PC-9 (cell line): ENCODE measurements at regions of chr20 and their contacts with region 1.

Region 1: DNA sequence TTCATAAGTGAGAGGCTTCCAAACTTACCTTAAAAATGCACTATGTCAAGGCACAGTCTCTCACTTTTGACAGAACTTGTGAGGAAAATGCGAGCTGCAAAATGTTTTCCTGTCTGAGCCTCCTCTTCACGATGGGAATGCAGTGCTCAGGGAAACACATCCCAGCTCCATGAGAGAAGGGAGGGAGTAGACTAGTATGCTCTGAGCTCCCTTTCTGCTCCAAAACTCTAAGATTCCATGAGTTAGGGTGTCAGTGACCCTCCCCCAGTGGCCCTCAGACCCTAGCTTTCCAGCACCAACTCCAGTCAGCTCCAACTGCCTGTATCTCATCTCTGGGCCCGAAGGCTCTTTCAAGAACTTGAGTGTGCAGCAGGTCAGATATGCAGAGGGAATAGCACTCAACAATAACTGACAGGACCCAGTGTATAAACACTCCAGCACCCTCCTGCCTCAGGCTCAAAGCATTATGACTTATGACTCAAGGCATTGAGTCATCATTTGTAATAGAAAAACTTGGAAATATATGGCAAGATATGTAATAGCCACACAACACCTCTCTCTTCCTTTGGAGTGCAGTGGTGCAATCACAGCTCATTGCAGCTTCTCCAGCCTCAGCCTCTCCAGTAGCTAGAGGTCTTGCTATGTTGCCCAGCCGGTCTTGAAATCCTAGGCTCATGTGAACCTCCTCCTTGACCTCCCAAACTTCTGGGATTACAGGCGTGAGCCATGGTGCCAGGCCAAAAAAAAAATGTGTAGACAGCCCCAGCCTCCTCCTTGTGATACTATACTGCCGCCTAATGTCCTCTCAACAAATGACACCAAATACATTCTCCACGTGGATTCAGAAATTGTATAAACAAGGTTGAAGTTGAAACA is 16.7 kb upstream of the ENTPD6 start:
- DNase-seq: peak; percentile 89 to 99
- H3K4me3 ChIP-seq: no peak overlapping the region
- H3K27ac ChIP-seq: peak overlapping the region; percentile 73
- H3K4me1 ChIP-seq: peaks cover 52% of the 10 kb centered on the region
- H3K27me3 ChIP-seq: no peaks in the 10 kb centered on the region
- CTCF ChIP-seq: peak; percentile 90

Region 2: DNA sequence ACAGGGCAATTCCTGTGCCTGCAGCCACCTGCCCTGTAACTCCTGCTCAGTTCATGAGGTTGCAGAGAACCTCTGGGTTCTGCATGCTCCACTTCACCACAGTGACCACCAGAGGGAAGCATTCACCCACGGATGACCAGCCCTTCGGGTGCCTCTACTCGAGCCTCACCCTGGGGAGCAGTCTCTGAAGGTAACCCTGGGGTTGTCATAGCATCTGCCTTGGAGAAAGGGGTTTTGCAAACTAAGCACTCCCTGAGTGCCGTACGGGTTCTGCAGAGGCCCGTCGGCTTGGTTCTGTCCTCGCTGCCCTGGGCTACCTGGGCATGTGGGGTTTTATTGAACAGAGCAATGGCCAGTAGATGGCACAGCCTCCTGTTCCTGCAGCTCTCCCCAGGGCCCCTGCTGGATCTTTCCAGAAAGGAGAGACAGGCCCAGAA is 1289.0 kb before region 1 on chr20:
- CTCF ChIA-PET with region 1: no interaction called
- POLR2A ChIA-PET with region 1: no interaction called
- intact Hi-C with region 1: loop called (anchors 5 kb)
- DNase-seq: peak; percentile 63 to 83
- H3K4me3 ChIP-seq: no peak overlapping the region; the same call in 1 of the 2 replicates
- H3K27ac ChIP-seq: no peak overlapping the region
- H3K4me1 ChIP-seq: peaks cover 14% of the 10 kb centered on the region
- H3K27me3 ChIP-seq: no peaks in the 10 kb centered on the region
- CTCF ChIP-seq: peak; percentile 96

Region 3: DNA sequence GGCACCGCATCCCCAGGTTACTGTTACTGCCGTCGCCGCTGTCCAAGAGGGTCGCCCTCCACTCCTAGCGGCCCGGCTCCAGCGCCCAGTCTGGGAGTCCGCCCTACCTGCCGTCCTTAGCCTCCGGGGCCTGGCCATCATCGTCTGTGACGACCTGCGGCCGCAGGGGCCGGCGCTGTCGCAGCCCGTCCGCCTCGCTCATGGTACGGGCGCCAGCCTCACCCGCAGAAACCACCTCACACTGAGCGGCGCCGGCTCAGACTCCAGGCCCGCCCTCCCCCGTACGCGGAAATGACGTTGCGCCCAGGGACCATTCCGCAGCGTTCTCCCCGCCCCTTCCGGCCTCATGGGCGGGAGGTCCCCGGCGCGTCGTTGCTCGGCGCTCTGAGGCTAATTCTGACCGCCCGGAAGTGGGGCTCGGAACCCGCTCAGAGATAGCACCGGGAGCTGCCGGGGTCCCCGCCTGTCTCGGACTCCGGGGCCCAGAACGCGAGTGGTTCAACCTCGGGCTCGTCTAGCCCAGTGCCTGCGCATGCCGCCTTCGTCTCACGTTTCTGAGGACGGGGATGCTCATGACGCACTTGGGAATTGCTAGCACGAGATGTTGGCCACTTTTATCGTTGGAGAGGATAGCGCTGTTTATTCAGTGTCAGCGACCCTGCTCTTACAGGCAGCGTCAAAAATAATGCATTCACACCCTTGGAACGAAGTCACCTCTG is 186.2 kb before region 1 on chr20 and contains the start of gene APMAP:
- CTCF ChIA-PET with region 1: interaction called, 6 read pairs
- POLR2A ChIA-PET with region 1: no interaction called
- intact Hi-C with region 1: loop called (anchors 1 kb)
- DNase-seq: peak; percentile 75 to 93
- H3K4me3 ChIP-seq: peak within 1 kb of the TSS; percentile 71
- H3K27ac ChIP-seq: peak within 1 kb of the TSS; percentile 54
- H3K4me1 ChIP-seq: peaks cover 49% of the 10 kb centered on the region
- H3K27me3 ChIP-seq: no peaks in the 10 kb centered on the region
- CTCF ChIP-seq: no peak
- total RNA-seq, gene APMAP: 96.6 and 103 TPM in 2 replicates

Region 4: DNA sequence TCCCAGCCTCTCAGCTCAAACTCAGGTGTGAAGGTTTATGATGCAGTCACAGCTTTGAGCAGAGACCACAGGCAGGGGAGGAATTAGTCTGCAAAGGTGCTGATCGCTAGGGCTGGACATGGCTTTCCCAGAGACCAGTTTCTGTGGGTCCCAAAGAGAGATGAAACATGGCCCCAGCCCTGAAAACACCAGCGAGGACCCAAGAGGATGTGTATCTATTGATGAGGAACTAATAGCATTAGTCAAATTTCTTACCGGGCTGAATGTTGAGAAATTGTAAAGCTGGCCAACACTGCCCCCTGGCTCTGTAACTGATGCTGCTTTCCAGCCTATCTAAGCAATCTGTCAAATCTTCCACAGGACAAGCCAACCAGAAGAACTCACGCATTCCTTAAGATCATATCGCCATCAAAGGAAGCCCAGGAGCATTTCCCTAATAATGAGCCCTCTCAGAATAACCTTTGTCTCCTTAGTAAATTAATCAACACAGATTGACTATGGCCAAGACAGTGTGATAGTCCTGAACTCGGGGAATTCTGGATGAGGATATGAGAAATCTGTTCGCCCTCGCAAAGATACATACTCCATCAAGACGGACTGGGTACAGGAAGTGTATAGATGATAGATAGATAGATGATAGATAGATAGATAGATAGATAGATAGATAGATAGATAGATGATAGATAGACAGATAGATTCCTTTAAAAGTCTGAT is 113.0 kb before region 1 on chr20:
- CTCF ChIA-PET with region 1: no interaction called
- POLR2A ChIA-PET with region 1: interaction called, 3 read pairs
- intact Hi-C with region 1: loop called (anchors 1 kb)
- DNase-seq: peak; percentile 68 to 76
- H3K4me3 ChIP-seq: no peak overlapping the region
- H3K27ac ChIP-seq: no peak overlapping the region
- H3K4me1 ChIP-seq: peaks cover 24% of the 10 kb centered on the region
- H3K27me3 ChIP-seq: no peaks in the 10 kb centered on the region
- CTCF ChIP-seq: peak; percentile 83

Region 5: DNA sequence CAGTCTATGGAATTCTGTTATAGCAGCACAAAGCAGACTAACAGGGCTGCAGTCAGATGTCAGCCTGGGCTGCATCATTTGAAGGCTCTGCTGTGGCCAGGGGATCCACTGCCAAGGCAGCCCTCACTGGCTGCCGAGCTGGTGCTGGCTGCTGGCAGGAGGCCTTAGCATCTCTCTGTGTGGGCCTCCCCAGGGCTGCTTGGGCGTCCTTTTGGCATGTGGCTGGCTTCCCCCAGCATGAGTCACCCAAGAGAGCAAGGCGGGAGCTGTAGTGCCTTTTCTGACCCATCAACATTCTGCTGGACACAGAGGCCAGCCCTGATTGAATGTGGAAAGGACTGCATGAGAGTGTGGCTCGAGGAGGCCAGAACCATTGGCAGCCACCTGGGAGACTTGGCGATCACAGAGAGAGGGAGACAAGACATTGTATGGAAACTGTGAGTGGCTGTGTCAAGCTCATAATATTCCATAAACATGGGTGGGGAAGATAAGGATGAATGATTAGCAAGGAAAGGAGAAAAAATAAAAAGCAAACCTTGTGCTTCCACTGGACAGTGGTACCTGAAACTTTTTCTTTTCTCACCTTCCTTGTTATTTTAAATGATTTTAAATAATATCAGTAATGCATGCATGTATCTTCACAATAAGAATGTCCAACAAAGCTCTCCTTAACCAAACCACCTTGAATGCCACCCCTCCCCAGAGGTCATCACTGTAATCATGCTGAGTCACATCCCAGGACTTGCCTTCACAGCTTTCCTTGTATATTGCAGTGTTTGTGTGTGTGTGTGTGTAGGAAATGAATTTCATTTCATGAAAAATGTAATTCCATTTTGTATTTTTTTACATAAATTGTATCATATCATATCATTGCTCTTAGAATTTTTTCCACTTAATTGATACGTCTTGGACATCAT is 41.9 kb before region 1 on chr20:
- CTCF ChIA-PET with region 1: interaction called, 3 read pairs
- POLR2A ChIA-PET with region 1: no interaction called
- intact Hi-C with region 1: loop called (anchors 2 kb)
- DNase-seq: peak; percentile 84 to 88
- H3K4me3 ChIP-seq: no peak overlapping the region
- H3K27ac ChIP-seq: peak overlapping the region; percentile 58
- H3K4me1 ChIP-seq: peaks cover 22% of the 10 kb centered on the region
- H3K27me3 ChIP-seq: no peaks in the 10 kb centered on the region
- CTCF ChIP-seq: no peak

Region 6: GRCh38 chr20:25254986-25255680 is 76.3 kb after region 1 on chr20:
- CTCF ChIA-PET with region 1: no interaction called
- POLR2A ChIA-PET with region 1: interaction called, 7 read pairs
- intact Hi-C with region 1: loop called (anchors 1 kb)
- DNase-seq: peak in 1 of 2 experiments; percentile 89
- H3K4me3 ChIP-seq: no peak overlapping the region; the same call in 1 of the 2 replicates
- H3K27ac ChIP-seq: peak overlapping the region; percentile 86; the same call in 1 of the 2 replicates
- H3K4me1 ChIP-seq: peaks cover 65% of the 10 kb centered on the region
- H3K27me3 ChIP-seq: no peaks in the 10 kb centered on the region
- CTCF ChIP-seq: no peak

Region 7: GRCh38 chr20:25571240-25571639 is 392.4 kb after region 1 on chr20:
- CTCF ChIA-PET with region 1: no interaction called
- POLR2A ChIA-PET with region 1: no interaction called
- intact Hi-C with region 1: no loop called
- DNase-seq: no peak
- H3K4me3 ChIP-seq: no peak overlapping the region
- H3K27ac ChIP-seq: no peak overlapping the region
- H3K4me1 ChIP-seq: no peaks in the 10 kb centered on the region
- H3K27me3 ChIP-seq: no peaks in the 10 kb centered on the region
- CTCF ChIP-seq: no peak